ENCODE measurements at regions of chr5 and their contacts with region 1.

Region 1: GRCh38 chr5:130289132-130290088 is 385.1 kb downstream of the CHSY3 start:
- DNase-seq: peak; percentile 88
- H3K4me3 Mint-ChIP-seq: peak overlapping the region; percentile 66
- H3K27ac Mint-ChIP-seq: peak overlapping the region; percentile 73
- H3K4me1 Mint-ChIP-seq: peaks cover 22% of the 10 kb centered on the region
- H3K27me3 Mint-ChIP-seq: no peaks in the 10 kb centered on the region
- CTCF ChIP-seq: no peak

Region 2: GRCh38 chr5:130333089-130333488 is 43.7 kb after region 1 on chr5:
- CTCF ChIA-PET with region 1: interaction called, 3 read pairs
- POLR2A ChIA-PET with region 1: interaction called, 3 read pairs
- intact Hi-C with region 1: loop called (anchors 2 kb)
- DNase-seq: peak; percentile 77
- H3K4me3 Mint-ChIP-seq: no peak overlapping the region
- H3K27ac Mint-ChIP-seq: peak overlapping the region; percentile 71
- H3K4me1 Mint-ChIP-seq: peaks cover 18% of the 10 kb centered on the region
- H3K27me3 Mint-ChIP-seq: no peaks in the 10 kb centered on the region
- CTCF ChIP-seq: no peak

Region 3: GRCh38 chr5:130720355-130720754 is 430.9 kb after region 1 on chr5:
- CTCF ChIA-PET with region 1: interaction called, 3 read pairs
- POLR2A ChIA-PET with region 1: no interaction called
- intact Hi-C with region 1: loop called (anchors 10 kb)
- DNase-seq: peak; percentile 88
- H3K4me3 Mint-ChIP-seq: no peak overlapping the region
- H3K27ac Mint-ChIP-seq: no peak overlapping the region
- H3K4me1 Mint-ChIP-seq: no peaks in the 10 kb centered on the region
- H3K27me3 Mint-ChIP-seq: no peaks in the 10 kb centered on the region
- CTCF ChIP-seq: peak; percentile 80